ENCODE measurements at regions of chr7 and their contacts with region 1.

Region 1: DNA sequence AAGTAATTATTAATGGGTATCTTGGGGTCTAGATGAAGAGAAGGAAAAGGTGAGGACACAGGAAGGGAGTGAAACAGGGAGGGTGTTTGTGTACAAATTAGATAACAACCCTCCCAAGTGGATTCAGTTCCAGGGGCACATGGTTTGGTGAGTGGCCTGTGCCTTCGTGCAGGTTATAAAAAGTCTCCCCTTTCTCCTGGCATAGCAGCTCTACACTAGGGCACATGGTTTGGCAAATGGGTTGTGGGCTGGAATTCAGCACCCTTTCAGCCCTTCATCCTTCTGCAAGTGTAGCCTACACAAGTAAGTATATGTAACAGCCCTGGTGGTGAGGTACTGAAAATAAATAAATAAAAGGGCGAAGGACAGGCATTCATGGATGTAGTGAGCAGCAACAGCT is 359.4 kb downstream of the AUTS2 start:
- DNase-seq: no peak

Region 2: GRCh38 chr7:69989551-69989950 is 31.9 kb after region 1 on chr7:
- intact Hi-C with region 1: loop called in 1 of 2 experiments (anchors 2 kb)
- DNase-seq: no peak